GM13976 (cell line): ENCODE measurements at regions of chr13 and their contacts with region 1.

Region 1: GRCh38 chr13:57624565-57625435 is 6.7 kb upstream of the PCDH17 start:
- DNase-seq: peak; percentile 43
- CTCF ChIP-seq: peak; percentile 71

Region 2: GRCh38 chr13:59318320-59318930 is 1693.6 kb after region 1 on chr13:
- in situ Hi-C with region 1: loop called (anchors 25 kb)
- DNase-seq: peak; percentile 27
- CTCF ChIP-seq: peak; percentile 70